GM12878 (cell line): ENCODE measurements at regions of chr6 and their contacts with region 1.

Region 1: DNA sequence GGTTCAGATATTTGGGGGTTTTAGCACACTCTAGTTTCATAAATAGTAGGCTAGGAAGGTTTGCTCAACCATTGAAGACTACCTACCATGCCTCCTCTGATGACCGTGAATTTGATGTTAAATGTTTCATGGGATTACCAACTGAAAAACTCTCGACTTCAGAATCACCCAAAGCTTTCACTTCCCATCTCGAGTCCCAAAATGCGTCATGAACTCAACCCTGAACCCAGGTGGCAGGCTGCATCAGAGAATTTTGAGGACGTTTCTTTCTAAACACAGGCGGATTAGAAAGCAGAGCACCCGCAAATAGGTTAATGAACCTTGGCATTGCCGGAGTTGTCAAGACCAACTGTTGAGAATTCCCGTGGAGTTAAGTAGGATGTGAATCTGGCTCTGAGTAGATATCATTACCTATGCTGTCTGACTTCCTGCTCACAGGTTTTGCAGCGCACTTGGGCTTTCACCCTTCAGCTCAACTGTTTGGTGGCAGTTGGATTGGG is 98.4 kb upstream of the ADTRP start:
- DNase-seq: peak; percentile 91
- ATAC-seq: peak; percentile 90
- H3K4me3 ChIP-seq: peak overlapping the region; percentile 22; the same call in 1 of the 2 replicates
- H3K27ac ChIP-seq: peak overlapping the region; percentile 82
- H3K4me1 ChIP-seq: peaks cover 19% of the 10 kb centered on the region
- H3K27me3 ChIP-seq: no peaks in the 10 kb centered on the region
- CTCF ChIP-seq: no peak
- EP300 ChIP-seq: peak; percentile 92 to 94; a peak in 3 of 4 replicates
- POLR2A ChIP-seq: no peak
- RAD21 ChIP-seq: no peak; the same call in 1 of the 2 replicates

Region 2: GRCh38 chr6:11700118-11700718 is 176.8 kb before region 1 on chr6:
- CTCF ChIA-PET with region 1: no interaction called
- POLR2A ChIA-PET with region 1: no interaction called
- RAD21 ChIA-PET with region 1: interaction called, 3 read pairs
- SMC1A ChIA-PET with region 1: interaction called, 5 read pairs
- in situ Hi-C with region 1: no loop called
- intact Hi-C with region 1: loop called (anchors 1 kb)
- DNase-seq: no peak
- ATAC-seq: peak; percentile 70
- H3K4me3 ChIP-seq: no peak overlapping the region
- H3K27ac ChIP-seq: no peak overlapping the region
- H3K4me1 ChIP-seq: peaks cover 4% of the 10 kb centered on the region
- H3K27me3 ChIP-seq: no peaks in the 10 kb centered on the region
- CTCF ChIP-seq: peak; percentile 35 to 50 (median 35); a peak in 3 of 6 replicates
- EP300 ChIP-seq: no peak
- POLR2A ChIP-seq: no peak
- RAD21 ChIP-seq: peak; percentile 82

Region 3: DNA sequence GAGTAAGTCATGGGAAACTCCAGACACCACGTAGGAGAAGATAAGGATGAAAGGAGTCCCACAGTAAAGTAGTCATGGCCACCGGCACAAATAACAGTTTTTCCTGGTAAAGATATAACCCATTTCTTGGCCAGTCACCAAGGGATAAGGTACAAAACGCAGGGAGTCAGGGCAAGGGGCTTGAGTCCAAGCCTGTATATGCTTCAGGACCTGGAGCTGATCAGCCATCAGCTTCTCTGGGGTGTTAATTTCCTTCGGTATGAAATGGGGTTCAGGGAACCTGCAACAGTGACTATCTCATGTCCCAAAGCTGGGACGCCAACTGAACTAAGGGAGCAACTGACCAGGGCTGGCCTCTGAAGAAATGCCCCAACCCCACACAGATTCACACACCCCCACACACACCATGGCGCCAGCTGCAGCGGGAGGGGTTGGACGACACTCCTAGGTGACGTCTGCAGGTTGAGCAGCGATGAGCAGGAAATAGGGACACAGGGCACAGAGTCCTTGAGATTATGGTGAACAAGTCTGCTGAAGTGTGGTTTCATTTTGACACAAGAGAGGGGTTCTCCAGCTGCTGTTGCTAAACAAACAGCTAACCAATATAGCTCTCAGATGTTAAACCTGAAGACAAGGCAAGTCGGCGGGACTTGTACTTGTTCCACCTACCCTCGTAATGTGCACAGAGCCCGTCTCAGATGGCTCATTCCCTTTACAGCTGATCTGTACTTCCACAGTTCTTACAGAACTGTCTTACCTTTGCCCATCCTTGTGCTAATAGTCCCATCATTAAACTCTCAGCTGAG is 91.0 kb before region 1 on chr6:
- CTCF ChIA-PET with region 1: no interaction called
- POLR2A ChIA-PET with region 1: interaction called, 3 read pairs
- RAD21 ChIA-PET with region 1: interaction called, 18 read pairs
- SMC1A ChIA-PET with region 1: interaction called, 19 read pairs
- in situ Hi-C with region 1: no loop called
- intact Hi-C with region 1: no loop called
- DNase-seq: peak; percentile 93
- ATAC-seq: peak; percentile 93
- H3K4me3 ChIP-seq: peak overlapping the region; percentile 46
- H3K27ac ChIP-seq: peak overlapping the region; percentile 89
- H3K4me1 ChIP-seq: peaks cover 25% of the 10 kb centered on the region
- H3K27me3 ChIP-seq: no peaks in the 10 kb centered on the region
- CTCF ChIP-seq: no peak
- EP300 ChIP-seq: peak; percentile 83 to 92
- POLR2A ChIP-seq: peak; percentile 66
- RAD21 ChIP-seq: peak; percentile 27; the same call in 1 of the 2 replicates

Region 4: GRCh38 chr6:11833626-11834592 is 43.1 kb before region 1 on chr6:
- CTCF ChIA-PET with region 1: interaction called, 7 read pairs
- POLR2A ChIA-PET with region 1: interaction called, 13 read pairs
- RAD21 ChIA-PET with region 1: interaction called, 13 read pairs
- SMC1A ChIA-PET with region 1: interaction called, 44 read pairs
- in situ Hi-C with region 1: no loop called
- intact Hi-C with region 1: loop called (anchors 1 kb)
- DNase-seq: peak; percentile 84
- ATAC-seq: peak; percentile 84
- H3K4me3 ChIP-seq: peak overlapping the region; percentile 0; the same call in 1 of the 2 replicates
- H3K27ac ChIP-seq: peak overlapping the region; percentile 95
- H3K4me1 ChIP-seq: peaks cover 45% of the 10 kb centered on the region
- H3K27me3 ChIP-seq: no peaks in the 10 kb centered on the region
- CTCF ChIP-seq: no peak
- EP300 ChIP-seq: peak; percentile 97 to 100
- POLR2A ChIP-seq: peak; percentile 41; the same call in 1 of the 2 replicates
- RAD21 ChIP-seq: peak; percentile 42; the same call in 1 of the 2 replicates

Region 5: GRCh38 chr6:11865680-11866300 is 11.2 kb before region 1 on chr6:
- CTCF ChIA-PET with region 1: interaction called, 5 read pairs
- POLR2A ChIA-PET with region 1: no interaction called
- RAD21 ChIA-PET with region 1: no interaction called
- SMC1A ChIA-PET with region 1: interaction called, 19 read pairs
- in situ Hi-C with region 1: no loop called
- intact Hi-C with region 1: no loop called
- DNase-seq: no peak
- ATAC-seq: no peak
- H3K4me3 ChIP-seq: no peak overlapping the region
- H3K27ac ChIP-seq: no peak overlapping the region
- H3K4me1 ChIP-seq: no peaks in the 10 kb centered on the region
- H3K27me3 ChIP-seq: no peaks in the 10 kb centered on the region
- CTCF ChIP-seq: no peak
- EP300 ChIP-seq: no peak
- POLR2A ChIP-seq: no peak
- RAD21 ChIP-seq: no peak